Right lobe of liver (tissue), 6 donors: ENCODE measurements at regions of chr3 and their contacts with region 1.

Region 1: DNA sequence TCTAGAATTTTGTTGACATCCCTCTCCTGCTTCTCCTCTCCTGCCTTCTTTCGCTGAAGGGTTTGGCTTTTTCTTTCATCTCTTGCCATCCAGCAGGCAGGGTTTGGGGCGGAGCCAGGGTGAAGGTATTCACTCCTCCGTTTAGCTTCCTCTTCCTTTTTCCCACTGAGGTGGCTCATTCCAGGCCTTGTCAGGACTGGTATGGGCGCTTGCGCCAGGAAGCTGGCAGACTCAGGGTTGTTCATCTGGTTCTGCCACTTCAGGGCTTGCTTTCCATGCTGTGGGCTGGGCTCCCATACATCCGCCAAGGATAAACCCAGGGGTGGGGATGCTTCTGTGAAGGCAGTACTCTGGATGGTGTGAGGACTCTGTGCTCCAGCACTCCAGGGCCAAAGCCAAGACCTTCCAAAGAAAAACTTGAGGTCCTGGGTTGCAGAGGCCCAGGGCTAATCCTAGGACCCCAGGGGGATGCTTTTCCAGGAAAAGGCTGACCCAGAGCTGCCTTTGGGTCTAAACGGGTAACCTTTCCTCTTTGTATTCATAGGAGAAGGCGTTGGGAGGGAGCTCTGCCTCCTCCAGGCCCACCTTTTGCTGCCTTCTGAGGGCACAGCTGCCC is 7.7 kb upstream of the AMOTL2 start:
- DNase-seq: no peak
- ATAC-seq: peak in 2 of 4 donors; percentile 34 to 56
- H3K4me3 ChIP-seq: no peak overlapping the region
- H3K27ac ChIP-seq: no peak overlapping the region
- H3K4me1 ChIP-seq: peaks cover 0 to 4% (median under 1%) of the 10 kb centered on the region in 4 donors
- H3K27me3 ChIP-seq: no peaks in the 10 kb centered on the region
- CTCF ChIP-seq: no peak
- POLR2A ChIP-seq: no peak

Region 2: DNA sequence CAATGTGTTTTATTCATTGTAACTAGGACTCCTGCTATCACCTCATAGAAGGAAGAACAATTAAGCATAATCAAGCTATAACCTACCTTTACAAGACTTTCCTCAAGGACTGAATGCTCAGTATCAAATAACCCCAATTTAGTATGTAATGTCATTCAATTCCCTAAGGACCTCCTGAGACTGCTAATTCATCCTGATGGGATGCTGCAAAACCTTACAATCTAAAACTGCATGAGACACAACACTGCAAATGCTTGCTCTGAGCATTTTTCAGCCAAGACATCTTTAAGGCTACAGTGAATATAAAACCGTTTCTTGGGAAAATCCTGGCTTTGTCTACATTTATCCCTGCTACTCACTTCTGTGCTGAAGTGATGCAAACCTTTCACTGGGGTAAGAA is 201.2 kb before region 1 on chr3:
- intact Hi-C with region 1: no loop called
- DNase-seq: no peak
- ATAC-seq: no peak
- H3K4me3 ChIP-seq: no peak overlapping the region
- H3K27ac ChIP-seq: no peak overlapping the region
- H3K4me1 ChIP-seq: no peaks in the 10 kb centered on the region
- H3K27me3 ChIP-seq: no peaks in the 10 kb centered on the region
- CTCF ChIP-seq: no peak
- POLR2A ChIP-seq: no peak

Region 3: DNA sequence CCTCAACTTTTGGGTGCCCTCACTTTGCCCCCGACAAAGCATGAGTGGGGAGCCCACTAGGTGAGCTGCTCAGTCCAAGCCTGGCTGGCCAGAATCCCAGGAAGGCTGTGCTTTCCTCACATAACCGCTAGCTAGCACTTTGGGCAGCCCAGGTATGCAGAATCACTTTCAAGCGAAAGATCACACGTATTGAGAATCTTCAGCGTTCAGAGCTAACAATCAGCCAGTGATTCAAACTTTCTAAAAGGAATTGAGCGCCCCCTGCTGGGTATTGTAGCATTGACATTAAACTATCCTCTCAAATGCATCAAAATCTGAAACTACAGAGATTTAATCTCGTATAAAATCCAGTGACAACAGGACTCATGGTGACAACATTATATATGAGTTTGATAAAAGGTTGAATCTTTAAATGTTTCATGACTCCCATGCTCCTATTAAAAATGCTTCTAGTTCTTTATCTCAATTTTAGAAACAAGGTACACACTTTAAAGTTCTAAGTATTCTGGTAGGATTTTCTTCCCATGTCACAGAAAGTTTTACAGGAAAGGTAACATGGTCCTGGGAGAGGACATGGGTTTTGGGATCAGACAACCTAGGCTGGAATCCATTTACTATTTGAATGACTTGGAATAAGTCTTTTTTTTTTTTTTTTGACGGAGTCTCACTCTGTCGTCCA is 92.1 kb after region 1 on chr3:
- intact Hi-C with region 1: loop called in 1 of 2 experiments (anchors 10 kb)
- DNase-seq: peak in 2 of 3 donors; percentile 37 to 76
- ATAC-seq: peak; percentile 77 to 88 (median 82)
- H3K4me3 ChIP-seq: no peak overlapping the region
- H3K27ac ChIP-seq: no peak overlapping the region
- H3K4me1 ChIP-seq: peaks cover 0 to 31% (median 6%) of the 10 kb centered on the region in 4 donors
- H3K27me3 ChIP-seq: no peaks in the 10 kb centered on the region
- CTCF ChIP-seq: peak; percentile 83 to 85 (median 85)
- POLR2A ChIP-seq: no peak

Region 4: DNA sequence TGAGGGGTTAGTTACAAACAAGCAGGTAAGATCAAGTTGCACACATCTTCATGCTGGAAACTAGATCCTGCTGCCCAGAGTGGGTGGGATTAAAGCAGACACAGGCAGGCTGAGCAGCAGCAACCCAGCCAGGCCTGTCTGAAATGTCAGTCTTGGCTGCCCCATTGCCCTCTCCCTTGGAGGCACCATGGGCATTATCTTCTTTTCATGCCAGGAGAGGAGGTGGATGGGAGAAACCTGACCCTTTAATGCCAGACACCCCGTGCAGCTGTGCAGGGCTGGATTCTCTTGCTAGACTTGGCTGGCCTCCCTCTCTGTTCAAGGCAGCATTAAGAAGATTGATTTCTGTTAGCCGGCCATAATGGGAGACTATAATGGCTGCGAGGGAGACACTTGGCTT is 390.1 kb after region 1 on chr3:
- intact Hi-C with region 1: no loop called
- DNase-seq: no peak
- ATAC-seq: no peak
- H3K4me3 ChIP-seq: no peak overlapping the region
- H3K27ac ChIP-seq: no peak overlapping the region
- H3K4me1 ChIP-seq: no peaks in the 10 kb centered on the region
- H3K27me3 ChIP-seq: no peaks in the 10 kb centered on the region
- CTCF ChIP-seq: no peak
- POLR2A ChIP-seq: no peak